ENCODE measurements at regions of chr13 and their contacts with region 1.

Region 1: GRCh38 chr13:79385694-79386093 is 20.4 kb downstream of the RBM26 start:
- DNase-seq: peak; percentile 85
- ATAC-seq: peak; percentile 89
- H3K4me3 ChIP-seq: no peak overlapping the region
- H3K27ac ChIP-seq: peak overlapping the region; percentile 68
- H3K4me1 ChIP-seq: peaks cover 56% of the 10 kb centered on the region
- H3K27me3 ChIP-seq: no peaks in the 10 kb centered on the region
- CTCF ChIP-seq: no peak
- EP300 ChIP-seq: peak; percentile 68 to 81; a peak in 3 of 4 replicates
- POLR2A ChIP-seq: no peak
- RAD21 ChIP-seq: no peak

Region 2: GRCh38 chr13:79194272-79194671 is 191.4 kb before region 1 on chr13:
- CTCF ChIA-PET with region 1: interaction called, 3 read pairs
- POLR2A ChIA-PET with region 1: no interaction called
- RAD21 ChIA-PET with region 1: no interaction called
- SMC1A ChIA-PET with region 1: interaction called, 3 read pairs
- in situ Hi-C with region 1: no loop called
- intact Hi-C with region 1: loop called (anchors 5 kb)
- DNase-seq: peak; percentile 92
- ATAC-seq: peak; percentile 93
- H3K4me3 ChIP-seq: peak overlapping the region; percentile 43; the same call in 1 of the 2 replicates
- H3K27ac ChIP-seq: peak overlapping the region; percentile 93
- H3K4me1 ChIP-seq: peaks cover 43% of the 10 kb centered on the region
- H3K27me3 ChIP-seq: no peaks in the 10 kb centered on the region
- CTCF ChIP-seq: no peak
- EP300 ChIP-seq: peak; percentile 89 to 95
- POLR2A ChIP-seq: no peak
- RAD21 ChIP-seq: 0 out of 2 replicates have a peak, but pooled peaks have one; percentile 12

Region 3: DNA sequence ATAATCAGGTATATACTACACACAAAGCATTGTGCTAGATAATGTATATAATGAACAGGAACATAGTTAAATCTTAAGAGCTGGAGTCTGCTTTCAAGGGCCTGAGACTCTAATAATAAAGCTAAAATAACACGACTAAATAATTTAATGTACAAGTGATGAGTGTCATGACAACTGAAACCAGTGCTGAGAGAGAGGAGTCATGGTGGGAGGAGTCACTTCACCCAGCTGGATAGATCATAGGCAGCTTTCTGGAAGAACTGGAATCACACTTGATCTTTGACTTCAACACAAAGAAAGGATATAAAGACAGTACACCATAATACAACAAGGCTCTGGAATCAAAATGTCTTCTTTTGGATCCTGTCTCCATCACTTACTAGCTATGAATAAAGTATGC is 13.2 kb after region 1 on chr13:
- CTCF ChIA-PET with region 1: interaction called, 48 read pairs
- POLR2A ChIA-PET with region 1: interaction called, 10 read pairs
- RAD21 ChIA-PET with region 1: interaction called, 10 read pairs
- SMC1A ChIA-PET with region 1: interaction called, 22 read pairs
- in situ Hi-C with region 1: no loop called
- intact Hi-C with region 1: no loop called
- DNase-seq: no peak
- ATAC-seq: no peak
- H3K4me3 ChIP-seq: no peak overlapping the region
- H3K27ac ChIP-seq: no peak overlapping the region
- H3K4me1 ChIP-seq: peaks cover 7% of the 10 kb centered on the region
- H3K27me3 ChIP-seq: no peaks in the 10 kb centered on the region
- CTCF ChIP-seq: no peak
- EP300 ChIP-seq: no peak
- POLR2A ChIP-seq: no peak
- RAD21 ChIP-seq: no peak

Region 4: DNA sequence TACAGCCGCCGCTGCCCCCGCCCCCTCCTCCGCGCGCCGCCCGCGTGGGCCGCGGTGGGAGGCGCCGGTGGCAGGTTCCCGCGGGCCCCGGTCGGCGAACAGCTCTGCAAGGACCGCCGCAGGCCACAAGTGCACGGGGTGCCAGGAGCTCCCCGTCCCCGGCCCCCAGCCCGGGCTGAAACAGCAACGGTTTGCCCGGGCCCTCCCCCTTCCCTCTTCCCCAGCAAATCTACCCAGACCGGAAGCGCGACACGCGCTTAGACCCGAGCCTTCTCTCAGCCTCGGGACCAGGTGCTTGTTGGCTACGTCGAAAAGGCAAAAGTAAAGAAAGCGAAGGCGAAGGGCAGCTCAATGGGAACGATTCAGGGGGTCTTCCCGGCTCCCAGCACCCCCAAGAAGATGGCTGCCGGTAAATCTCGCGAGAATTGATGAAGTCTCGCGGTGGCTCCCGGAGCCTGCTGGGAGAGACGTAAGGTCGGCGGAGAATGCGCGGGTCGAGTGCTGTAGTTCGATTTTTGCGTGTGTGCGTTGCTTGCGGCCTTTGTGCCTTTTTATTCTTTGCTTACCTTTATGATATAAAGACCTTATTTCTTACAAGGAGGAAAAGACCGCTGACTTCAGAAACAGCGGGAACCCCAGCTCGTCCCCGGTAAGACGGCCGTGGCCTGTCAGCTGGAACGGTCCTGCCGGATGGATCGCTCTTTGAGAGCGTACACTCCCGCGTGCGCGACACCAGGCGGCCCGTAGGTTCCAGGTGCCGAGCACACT is 20.3 kb after region 1 on chr13 and contains the start of gene RBM26:
- CTCF ChIA-PET with region 1: interaction called, 32 read pairs
- POLR2A ChIA-PET with region 1: interaction called, 10 read pairs
- RAD21 ChIA-PET with region 1: interaction called, 10 read pairs
- SMC1A ChIA-PET with region 1: interaction called, 22 read pairs
- in situ Hi-C with region 1: no loop called
- intact Hi-C with region 1: no loop called
- DNase-seq: peak; percentile 76
- ATAC-seq: peak; percentile 73
- H3K4me3 ChIP-seq: peak within 1 kb of the TSS; percentile 99
- H3K27ac ChIP-seq: peak within 1 kb of the TSS; percentile 99
- H3K4me1 ChIP-seq: peaks cover 2% of the 10 kb centered on the region; the same call in 1 of the 2 replicates
- H3K27me3 ChIP-seq: no peaks in the 10 kb centered on the region
- CTCF ChIP-seq: no peak
- EP300 ChIP-seq: no peak
- POLR2A ChIP-seq: peak; percentile 95
- RAD21 ChIP-seq: no peak
- polyA plus RNA-seq, gene RBM26: 17.6 to 19.2 TPM

Measured in GM12878 (cell line).